H1 (cell line): ENCODE measurements at regions of chr1 and their contacts with region 1.

Region 1: DNA sequence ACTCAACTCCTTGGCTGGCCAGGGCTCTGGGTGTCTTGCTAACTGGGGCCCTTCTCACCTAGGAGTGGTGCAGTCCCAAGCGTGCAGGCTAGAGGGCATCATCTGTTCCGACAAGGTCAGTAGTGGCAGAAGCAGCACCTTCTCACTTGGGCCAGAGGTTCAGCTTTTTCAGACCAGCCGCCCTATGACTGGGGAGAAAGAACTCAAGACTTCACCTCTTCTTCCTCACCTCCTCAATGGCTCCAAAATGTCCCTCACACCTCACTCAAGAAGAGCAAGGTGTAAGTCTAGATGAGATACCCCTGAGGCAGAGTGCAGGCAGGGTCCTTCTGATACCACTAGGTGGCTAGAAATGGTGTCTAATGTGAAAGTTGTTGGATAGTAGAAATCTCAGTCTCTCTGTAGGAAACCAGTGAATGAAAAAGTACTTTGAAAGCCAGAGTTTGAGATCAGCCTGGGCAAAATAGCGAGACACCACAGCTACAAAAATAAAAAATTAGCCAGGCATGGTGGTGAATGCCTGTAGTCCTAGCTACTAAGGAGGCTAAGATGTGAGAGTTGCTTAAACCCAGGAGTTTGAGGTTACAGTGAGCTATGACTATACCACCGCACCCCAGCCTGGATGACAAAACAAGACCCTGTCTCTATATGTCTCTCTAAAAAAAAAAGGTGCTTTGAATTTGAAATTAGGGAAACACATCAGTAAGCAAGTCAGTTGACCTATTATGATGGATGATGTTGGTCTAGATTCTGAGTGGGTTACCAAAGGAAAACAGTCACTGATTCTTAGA is 8.6 kb upstream of the IL20 start:
- DNase-seq: no peak
- H3K4me3 ChIP-seq: no peak overlapping the region
- H3K27ac ChIP-seq: no peak overlapping the region
- H3K4me1 ChIP-seq: no peaks in the 10 kb centered on the region
- H3K27me3 ChIP-seq: no peaks in the 10 kb centered on the region
- CTCF ChIP-seq: peak; percentile 39 to 47 (median 46)
- EP300 ChIP-seq: no peak
- POLR2A ChIP-seq: no peak
- RAD21 ChIP-seq: 0 out of 4 replicates have a peak, but pooled peaks have one; percentile 1 to 22

Region 2: GRCh38 chr1:206753141-206753540 is 103.7 kb before region 1 on chr1:
- CTCF ChIA-PET with region 1: no interaction called
- POLR2A ChIA-PET with region 1: no interaction called
- DNase-seq: no peak
- H3K4me3 ChIP-seq: no peak overlapping the region
- H3K27ac ChIP-seq: no peak overlapping the region
- H3K4me1 ChIP-seq: no peaks in the 10 kb centered on the region
- H3K27me3 ChIP-seq: peaks cover 2 to 7% (median 4%) of the 10 kb centered on the region in 4 experiments; a peak in 5 of 7 replicates
- CTCF ChIP-seq: no peak
- EP300 ChIP-seq: no peak
- POLR2A ChIP-seq: no peak
- RAD21 ChIP-seq: no peak

Region 3: DNA sequence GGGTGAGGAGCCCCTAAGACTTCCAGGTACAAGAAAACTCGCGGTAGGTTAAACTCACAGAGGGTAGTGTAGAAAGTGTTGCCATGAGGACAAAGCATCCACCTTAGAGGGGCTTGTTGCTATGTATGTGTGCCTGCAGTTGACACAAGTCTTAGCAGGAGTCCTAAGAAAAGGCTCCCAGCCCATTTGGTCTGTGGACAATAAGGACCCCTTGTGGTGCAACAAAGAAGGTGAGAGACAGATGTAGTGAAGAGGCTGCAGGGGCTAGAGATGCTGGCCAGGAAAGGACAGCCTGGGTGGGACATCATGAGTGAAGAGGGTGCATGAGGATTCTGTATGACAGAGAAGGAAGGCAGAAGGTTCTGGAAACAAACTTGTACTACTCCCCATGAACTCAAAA is 48.3 kb before region 1 on chr1:
- CTCF ChIA-PET with region 1: interaction called, 26 read pairs
- POLR2A ChIA-PET with region 1: no interaction called
- DNase-seq: no peak
- H3K4me3 ChIP-seq: no peak overlapping the region
- H3K27ac ChIP-seq: no peak overlapping the region
- H3K4me1 ChIP-seq: no peaks in the 10 kb centered on the region
- H3K27me3 ChIP-seq: no peaks in the 10 kb centered on the region
- CTCF ChIP-seq: peak; percentile 6 to 53 (median 44)
- EP300 ChIP-seq: no peak
- POLR2A ChIP-seq: no peak
- RAD21 ChIP-seq: peak; percentile 62 to 73

Region 4: DNA sequence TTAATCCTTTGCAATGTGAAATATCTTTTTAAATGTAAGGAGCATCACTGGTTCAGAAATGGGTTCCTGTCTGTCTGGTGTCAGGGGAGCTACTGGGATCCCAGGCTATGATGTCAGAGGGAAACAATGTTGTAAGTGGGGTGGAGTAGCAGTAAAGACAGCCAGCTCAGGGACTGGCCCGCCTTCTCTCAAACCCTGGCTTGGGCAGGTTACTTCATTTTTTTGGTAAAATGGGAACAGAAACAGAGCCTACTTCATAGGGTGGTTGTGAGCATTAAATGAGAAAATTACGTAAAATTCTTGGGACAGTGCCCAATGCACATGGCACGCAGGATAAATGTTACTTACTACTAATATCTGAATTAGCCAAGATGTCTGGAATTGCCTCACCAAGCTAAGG is 22.2 kb before region 1 on chr1:
- CTCF ChIA-PET with region 1: interaction called, 16 read pairs
- POLR2A ChIA-PET with region 1: interaction called, 3 read pairs
- DNase-seq: peak in 1 of 2 experiments; percentile 26
- H3K4me3 ChIP-seq: no peak overlapping the region
- H3K27ac ChIP-seq: no peak overlapping the region
- H3K4me1 ChIP-seq: no peaks in the 10 kb centered on the region
- H3K27me3 ChIP-seq: no peaks in the 10 kb centered on the region
- CTCF ChIP-seq: no peak
- EP300 ChIP-seq: no peak
- POLR2A ChIP-seq: no peak
- RAD21 ChIP-seq: no peak

Region 5: DNA sequence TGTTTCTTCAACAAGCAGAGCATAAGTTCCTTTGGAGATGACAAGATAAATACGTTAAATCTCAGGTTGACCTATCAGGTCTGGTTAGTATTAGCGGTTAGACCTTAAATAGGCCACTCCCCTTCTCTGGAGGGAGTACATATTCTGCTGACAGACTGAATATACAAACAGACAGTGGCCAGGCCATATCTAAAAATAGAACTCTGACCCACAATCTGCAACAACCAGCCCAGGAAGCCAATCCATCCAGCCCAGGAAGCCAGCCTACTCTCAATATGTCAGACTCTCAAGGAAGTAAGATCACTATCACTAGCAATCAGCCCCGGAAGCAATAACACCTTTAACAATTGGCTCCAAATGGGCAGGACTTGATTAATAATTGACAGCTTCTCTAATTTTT is 15.3 kb after region 1 on chr1:
- CTCF ChIA-PET with region 1: interaction called, 12 read pairs
- POLR2A ChIA-PET with region 1: no interaction called
- DNase-seq: no peak
- H3K4me3 ChIP-seq: no peak overlapping the region
- H3K27ac ChIP-seq: no peak overlapping the region
- H3K4me1 ChIP-seq: no peaks in the 10 kb centered on the region
- H3K27me3 ChIP-seq: no peaks in the 10 kb centered on the region; a peak in 1 of 7 replicates
- CTCF ChIP-seq: no peak
- EP300 ChIP-seq: no peak
- POLR2A ChIP-seq: no peak
- RAD21 ChIP-seq: no peak

Region 6: DNA sequence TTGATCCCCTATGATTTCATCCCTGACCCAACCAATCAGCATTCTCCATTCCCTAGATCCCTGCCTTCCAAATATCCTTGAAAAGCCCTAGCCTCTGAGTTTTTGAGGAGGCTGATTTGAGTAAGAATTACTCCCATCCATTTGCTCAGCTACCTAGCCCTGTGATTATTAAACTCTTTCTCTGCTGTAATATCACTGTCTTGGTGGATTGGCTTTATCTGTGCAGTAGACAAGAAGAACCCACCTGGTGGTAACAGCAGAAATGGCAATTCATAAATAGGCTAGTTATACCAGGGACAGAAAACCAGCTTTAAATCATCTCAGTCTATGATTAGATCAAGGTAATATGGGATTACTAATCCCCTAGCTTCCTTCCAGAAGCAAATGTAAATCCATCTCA is 21.6 kb after region 1 on chr1:
- CTCF ChIA-PET with region 1: interaction called, 12 read pairs
- POLR2A ChIA-PET with region 1: no interaction called
- DNase-seq: no peak
- H3K4me3 ChIP-seq: no peak overlapping the region
- H3K27ac ChIP-seq: no peak overlapping the region
- H3K4me1 ChIP-seq: no peaks in the 10 kb centered on the region
- H3K27me3 ChIP-seq: no peaks in the 10 kb centered on the region
- CTCF ChIP-seq: peak in 1 of 3 experiments; percentile 30; a peak in 1 of 4 replicates
- EP300 ChIP-seq: no peak
- POLR2A ChIP-seq: no peak
- RAD21 ChIP-seq: no peak

Region 7: DNA sequence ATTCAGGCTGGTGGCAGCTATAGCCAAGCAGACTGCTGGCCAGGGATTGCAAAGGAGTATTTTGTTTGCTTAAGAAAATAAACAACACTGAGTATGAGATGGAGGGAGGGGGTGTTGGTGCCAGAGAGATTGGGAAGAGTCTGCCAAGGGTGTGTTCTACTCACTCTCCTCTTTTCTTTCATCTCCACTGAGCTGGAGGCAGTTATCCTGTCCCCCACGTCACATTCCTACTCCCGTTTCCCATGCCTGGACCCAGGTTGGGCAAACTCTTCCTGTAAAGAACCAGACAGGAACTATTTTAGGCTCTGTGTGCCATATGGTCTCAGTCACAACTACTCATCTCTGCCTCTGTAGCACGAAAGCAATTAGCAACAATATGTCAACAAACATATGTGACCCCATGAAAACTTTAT is 39.0 kb after region 1 on chr1:
- CTCF ChIA-PET with region 1: interaction called, 16 read pairs
- POLR2A ChIA-PET with region 1: no interaction called
- DNase-seq: no peak
- H3K4me3 ChIP-seq: no peak overlapping the region
- H3K27ac ChIP-seq: no peak overlapping the region
- H3K4me1 ChIP-seq: peaks cover 0 to 1% (median 0%) of the 10 kb centered on the region in 4 experiments; a peak in 2 of 7 replicates
- H3K27me3 ChIP-seq: no peaks in the 10 kb centered on the region
- CTCF ChIP-seq: no peak
- EP300 ChIP-seq: no peak
- POLR2A ChIP-seq: no peak
- RAD21 ChIP-seq: no peak